ENCODE measurements at regions of chr1 and their contacts with region 1.

Region 1: GRCh38 chr1:155859234-155859829 is at the start of gene SYT11:
- DNase-seq: peak; percentile 97
- H3K4me3 Mint-ChIP-seq: peak within 1 kb of the TSS; percentile 68
- H3K27ac Mint-ChIP-seq: peak within 1 kb of the TSS; percentile 59
- H3K4me1 Mint-ChIP-seq: peaks cover 6% of the 10 kb centered on the region
- H3K27me3 Mint-ChIP-seq: peaks cover 40% of the 10 kb centered on the region
- CTCF ChIP-seq: no peak
- total RNA-seq, gene SYT11: 0.98 and 1.0 TPM in 2 replicates

Region 2: GRCh38 chr1:154936555-154937084 is 922.7 kb before region 1 on chr1 and contains the start of gene PMVK:
- CTCF ChIA-PET with region 1: no interaction called
- intact Hi-C with region 1: no loop called
- DNase-seq: peak; percentile 97
- H3K4me3 Mint-ChIP-seq: peak within 1 kb of the TSS; percentile 95
- H3K27ac Mint-ChIP-seq: peak within 1 kb of the TSS; percentile 99
- H3K4me1 Mint-ChIP-seq: peaks cover 50% of the 10 kb centered on the region
- H3K27me3 Mint-ChIP-seq: no peaks in the 10 kb centered on the region
- CTCF ChIP-seq: peak; percentile 26
- total RNA-seq, gene PMVK: 43.0 and 47.3 TPM in 2 replicates

Region 3: GRCh38 chr1:155893389-155894142 is 34.2 kb after region 1 on chr1:
- CTCF ChIA-PET with region 1: interaction called, 7 read pairs
- intact Hi-C with region 1: loop called (anchors 5 kb)
- DNase-seq: peak; percentile 43
- H3K4me3 Mint-ChIP-seq: peak overlapping the region; percentile 10
- H3K27ac Mint-ChIP-seq: peak overlapping the region; percentile 56
- H3K4me1 Mint-ChIP-seq: peaks cover 29% of the 10 kb centered on the region
- H3K27me3 Mint-ChIP-seq: no peaks in the 10 kb centered on the region
- CTCF ChIP-seq: no peak

Region 4: GRCh38 chr1:155911156-155912055 is 52.1 kb after region 1 on chr1 and contains the start of gene RIT1:
- CTCF ChIA-PET with region 1: interaction called, 8 read pairs
- intact Hi-C with region 1: loop called (anchors 5 kb)
- DNase-seq: peak; percentile 92
- H3K4me3 Mint-ChIP-seq: peak within 1 kb of the TSS; percentile 97
- H3K27ac Mint-ChIP-seq: peak within 1 kb of the TSS; percentile 99
- H3K4me1 Mint-ChIP-seq: peaks cover 20% of the 10 kb centered on the region
- H3K27me3 Mint-ChIP-seq: no peaks in the 10 kb centered on the region
- CTCF ChIP-seq: no peak
- total RNA-seq, gene RIT1: 34.4 and 34.7 TPM in 2 replicates

Measured in Calu3 (cell line).